ENCODE measurements at regions of chr11 and their contacts with region 1.

Region 1: DNA sequence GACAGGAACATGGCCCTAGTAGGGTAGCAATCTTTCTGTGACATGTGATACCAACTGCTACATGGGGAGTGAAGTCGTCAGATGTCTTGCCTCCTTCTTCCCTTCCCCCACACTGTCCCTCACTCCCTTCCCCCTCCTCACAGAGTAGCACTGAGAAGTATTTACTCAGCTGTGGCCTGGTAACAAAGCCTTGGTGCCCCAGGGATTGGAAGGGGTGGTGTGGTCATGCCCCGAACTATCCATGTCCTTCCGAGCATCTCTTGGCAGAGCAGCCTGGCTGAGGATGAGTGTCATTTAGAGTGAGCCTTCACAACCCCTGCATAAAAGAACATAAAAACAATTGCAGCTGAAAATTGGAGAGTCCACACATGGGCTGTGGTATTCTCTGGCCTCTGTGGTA is 46.1 kb downstream of the ARFGAP2 start:
- DNase-seq: peak in 1 of 2 donors; percentile 11
- ATAC-seq: peak in 1 of 8 donors; percentile 45
- H3K4me3 ChIP-seq: no peak overlapping the region
- H3K27ac ChIP-seq: no peak overlapping the region
- H3K4me1 ChIP-seq: peaks cover 0 to 16% (median 0%) of the 10 kb centered on the region in 9 donors
- H3K27me3 ChIP-seq: no peaks in the 10 kb centered on the region
- CTCF ChIP-seq: no peak

Region 2: DNA sequence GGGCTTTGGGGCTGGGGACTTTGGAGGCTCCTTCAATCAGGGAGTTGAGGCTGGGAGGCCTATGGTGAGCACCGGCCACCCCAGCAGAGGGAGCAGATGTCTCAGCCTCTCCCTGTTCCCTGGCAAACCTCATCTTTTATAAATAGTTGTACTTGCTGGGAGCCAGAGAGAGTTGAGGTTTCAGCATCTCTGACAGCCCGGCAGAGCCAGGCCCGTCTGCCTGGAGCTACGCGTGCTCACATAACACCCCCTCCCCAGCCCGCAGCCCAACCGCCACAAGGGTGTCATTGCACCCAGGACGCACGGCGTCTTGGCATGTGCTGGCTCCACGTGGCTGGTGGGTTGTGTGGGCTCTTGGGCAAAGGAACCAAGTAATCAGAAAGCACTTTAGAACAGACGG is 1592.2 kb before region 1 on chr11:
- intact Hi-C with region 1: loop called in 1 of 10 experiments (anchors 10 kb)
- DNase-seq: peak; percentile 16 to 20
- ATAC-seq: peak; percentile 46 to 91 (median 82)
- H3K4me3 ChIP-seq: no peak overlapping the region
- H3K27ac ChIP-seq: no peak overlapping the region
- H3K4me1 ChIP-seq: no peaks in the 10 kb centered on the region
- H3K27me3 ChIP-seq: peaks cover 0 to 40% (median 9%) of the 10 kb centered on the region in 7 donors
- CTCF ChIP-seq: peak in 6 of 9 donors; percentile 27 to 58 (median 36)